ENCODE measurements at regions of chr3 and their contacts with region 1.

Region 1: GRCh38 chr3:138417559-138417982 is 16.8 kb upstream of the ESYT3 start:
- DNase-seq: peak; percentile 76
- H3K4me3 ChIP-seq: no peak overlapping the region
- H3K27ac ChIP-seq: no peak overlapping the region
- H3K4me1 ChIP-seq: no peaks in the 10 kb centered on the region
- H3K27me3 ChIP-seq: peaks cover 4% of the 10 kb centered on the region
- CTCF ChIP-seq: peak; percentile 76 to 92 (median 90)
- EP300 ChIP-seq: no peak
- POLR2A ChIP-seq: no peak

Region 2: GRCh38 chr3:137820366-137820765 is 597.2 kb before region 1 on chr3:
- in situ Hi-C with region 1: no loop called
- intact Hi-C with region 1: no loop called
- DNase-seq: no peak
- H3K4me3 ChIP-seq: no peak overlapping the region
- H3K27ac ChIP-seq: no peak overlapping the region
- H3K4me1 ChIP-seq: no peaks in the 10 kb centered on the region
- H3K27me3 ChIP-seq: no peaks in the 10 kb centered on the region
- CTCF ChIP-seq: no peak
- EP300 ChIP-seq: no peak
- POLR2A ChIP-seq: no peak

Region 3: GRCh38 chr3:138923531-138923994 is 506.0 kb after region 1 on chr3:
- in situ Hi-C with region 1: loop called in 2 of 4 experiments (anchors 10 to 25 kb)
- intact Hi-C with region 1: loop called (anchors 10 kb)
- DNase-seq: peak; percentile 89
- H3K4me3 ChIP-seq: no peak overlapping the region
- H3K27ac ChIP-seq: no peak overlapping the region
- H3K4me1 ChIP-seq: peaks cover 0 to 3% (median 0%) of the 10 kb centered on the region in 4 donors
- H3K27me3 ChIP-seq: no peaks in the 10 kb centered on the region
- CTCF ChIP-seq: peak; percentile 81 to 94 (median 89)
- EP300 ChIP-seq: no peak
- POLR2A ChIP-seq: no peak

Region 4: GRCh38 chr3:139319428-139320402 is 902.1 kb after region 1 on chr3:
- in situ Hi-C with region 1: loop called in 1 of 4 experiments (anchors 25 kb)
- intact Hi-C with region 1: no loop called
- DNase-seq: no peak
- H3K4me3 ChIP-seq: no peak overlapping the region
- H3K27ac ChIP-seq: no peak overlapping the region
- H3K4me1 ChIP-seq: no peaks in the 10 kb centered on the region
- H3K27me3 ChIP-seq: peaks cover 22% of the 10 kb centered on the region
- CTCF ChIP-seq: no peak
- EP300 ChIP-seq: no peak
- POLR2A ChIP-seq: no peak

Region 5: GRCh38 chr3:140023616-140024530 is 1606.3 kb after region 1 on chr3:
- in situ Hi-C with region 1: no loop called
- intact Hi-C with region 1: no loop called
- DNase-seq: peak; percentile 10
- H3K4me3 ChIP-seq: no peak overlapping the region
- H3K27ac ChIP-seq: no peak overlapping the region
- H3K4me1 ChIP-seq: peaks cover 0 to 7% (median 3%) of the 10 kb centered on the region in 4 donors
- H3K27me3 ChIP-seq: no peaks in the 10 kb centered on the region
- CTCF ChIP-seq: no peak
- EP300 ChIP-seq: no peak
- POLR2A ChIP-seq: no peak